Activated B cell treated with CpG ODN at 0.5 μM for 24 hours (primary cell): ENCODE measurements at regions of chr15 and their contacts with region 1.

Region 1: DNA sequence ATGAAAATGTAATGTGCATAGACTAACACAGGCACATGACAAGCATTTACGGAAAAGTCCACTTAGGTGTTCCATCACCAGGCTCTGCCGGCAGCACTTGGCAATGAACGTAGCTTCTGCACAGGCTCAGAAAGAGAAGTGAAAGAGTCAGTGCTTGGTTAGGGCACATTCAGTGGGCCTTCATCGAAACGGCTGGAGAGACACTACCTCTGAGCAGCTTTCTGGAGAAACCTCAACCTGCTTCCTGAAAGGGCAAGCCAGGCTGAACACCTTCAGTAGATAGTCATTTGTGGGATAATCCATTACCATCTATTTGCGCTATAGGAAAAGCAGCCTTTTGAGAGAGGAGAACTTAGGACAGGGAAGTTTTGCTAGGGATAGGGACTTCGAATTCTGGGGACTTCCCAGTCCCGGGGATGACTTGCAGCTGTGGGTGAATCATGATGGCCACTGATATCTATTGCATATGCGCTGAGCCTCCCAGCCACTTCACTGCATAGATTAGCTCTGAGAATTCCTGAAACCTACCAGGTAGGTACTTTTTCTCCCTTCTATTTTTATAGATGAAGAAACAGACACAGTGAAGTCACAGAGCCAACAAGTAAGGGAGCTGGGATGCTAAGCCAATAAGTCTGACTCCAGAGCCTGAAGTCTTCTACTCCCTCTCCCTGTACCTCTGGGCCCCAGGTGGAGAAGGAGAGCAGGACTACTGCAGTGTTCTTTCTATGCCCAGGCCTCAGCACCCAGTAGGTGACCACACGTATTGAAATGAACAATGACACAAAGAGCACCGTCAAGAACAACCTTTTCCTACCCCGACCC is 4.2 kb upstream of the SH2D7 start:
- DNase-seq: no peak
- ATAC-seq: peak; percentile 95
- H3K4me3 Mint-ChIP-seq: peak overlapping the region; percentile 56
- H3K27ac Mint-ChIP-seq: peak overlapping the region; percentile 79
- H3K4me1 Mint-ChIP-seq: peaks cover 18% of the 10 kb centered on the region
- H3K27me3 Mint-ChIP-seq: peaks cover 5% of the 10 kb centered on the region
- CTCF ChIP-seq: no peak

Region 2: GRCh38 chr15:77671363-77671986 is 416.7 kb before region 1 on chr15:
- CTCF ChIA-PET with region 1: no interaction called
- POLR2A ChIA-PET with region 1: no interaction called
- intact Hi-C with region 1: no loop called
- DNase-seq: no peak
- ATAC-seq: no peak
- H3K4me3 Mint-ChIP-seq: no peak overlapping the region
- H3K27ac Mint-ChIP-seq: no peak overlapping the region
- H3K4me1 Mint-ChIP-seq: no peaks in the 10 kb centered on the region
- H3K27me3 Mint-ChIP-seq: peaks cover 13% of the 10 kb centered on the region
- CTCF ChIP-seq: no peak

Region 3: DNA sequence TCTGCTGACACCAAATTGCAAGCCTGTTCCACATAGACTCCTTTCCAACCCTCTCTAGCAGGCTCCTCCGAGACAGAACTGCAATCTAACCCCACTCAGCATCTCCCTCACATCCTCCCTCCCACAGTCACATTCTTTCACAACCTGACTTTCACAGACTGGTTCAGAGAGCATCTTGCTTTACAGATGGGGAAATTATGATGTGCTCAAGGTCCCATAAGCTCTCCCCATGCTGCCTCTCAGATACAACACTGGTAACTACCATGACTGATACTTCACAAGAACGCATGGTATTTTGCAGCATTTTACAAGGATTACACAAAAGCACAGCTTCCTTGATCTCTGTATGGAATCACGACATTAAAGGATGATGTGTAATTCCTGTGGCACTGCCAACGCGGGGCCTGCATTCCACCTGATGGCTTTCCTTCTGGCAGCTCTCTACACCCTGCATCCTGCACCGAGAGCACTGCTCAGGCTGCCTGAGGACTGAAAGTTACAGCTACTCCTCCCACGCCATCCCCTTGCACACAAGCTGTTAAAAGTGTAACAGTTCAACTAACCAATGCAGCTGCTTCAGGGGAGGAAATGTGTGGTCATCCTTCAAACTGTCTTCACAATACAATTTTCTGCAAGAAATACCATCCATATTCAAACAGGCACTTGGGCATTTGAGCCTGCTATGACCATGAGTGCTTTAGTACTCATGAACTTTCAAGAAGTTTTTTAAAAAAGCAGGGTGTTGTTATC is 38.3 kb before region 1 on chr15:
- CTCF ChIA-PET with region 1: no interaction called
- POLR2A ChIA-PET with region 1: no interaction called
- intact Hi-C with region 1: loop called (anchors 5 kb)
- DNase-seq: no peak
- ATAC-seq: peak; percentile 60
- H3K4me3 Mint-ChIP-seq: peak overlapping the region; percentile 24
- H3K27ac Mint-ChIP-seq: peak overlapping the region; percentile 28
- H3K4me1 Mint-ChIP-seq: peaks cover 51% of the 10 kb centered on the region
- H3K27me3 Mint-ChIP-seq: no peaks in the 10 kb centered on the region
- CTCF ChIP-seq: no peak

Region 4: GRCh38 chr15:78120523-78120922 is 32.4 kb after region 1 on chr15:
- CTCF ChIA-PET with region 1: no interaction called
- POLR2A ChIA-PET with region 1: no interaction called
- intact Hi-C with region 1: no loop called
- DNase-seq: no peak
- ATAC-seq: no peak
- H3K4me3 Mint-ChIP-seq: no peak overlapping the region
- H3K27ac Mint-ChIP-seq: no peak overlapping the region
- H3K4me1 Mint-ChIP-seq: no peaks in the 10 kb centered on the region
- H3K27me3 Mint-ChIP-seq: no peaks in the 10 kb centered on the region
- CTCF ChIP-seq: no peak